HEK293 (cell line): ENCODE measurements at regions of chr6 and their contacts with region 1.

Region 1: GRCh38 chr6:26025894-26026832 is 61.1 kb upstream of the HFE start:
- H3K4me3 ChIP-seq: peak overlapping the region; percentile 48
- H3K27ac ChIP-seq: peak overlapping the region; percentile 47
- H3K4me1 ChIP-seq: peaks cover 18% of the 10 kb centered on the region
- CTCF ChIP-seq: peak; percentile 81

Region 2: GRCh38 chr6:26003102-26003694 is 23.0 kb before region 1 on chr6:
- CTCF ChIA-PET with region 1: interaction called, 198 read pairs
- POLR2A ChIA-PET with region 1: interaction called, 23 read pairs
- H3K4me3 ChIP-seq: no peak overlapping the region
- H3K27ac ChIP-seq: no peak overlapping the region
- H3K4me1 ChIP-seq: no peaks in the 10 kb centered on the region
- CTCF ChIP-seq: no peak

Region 3: DNA sequence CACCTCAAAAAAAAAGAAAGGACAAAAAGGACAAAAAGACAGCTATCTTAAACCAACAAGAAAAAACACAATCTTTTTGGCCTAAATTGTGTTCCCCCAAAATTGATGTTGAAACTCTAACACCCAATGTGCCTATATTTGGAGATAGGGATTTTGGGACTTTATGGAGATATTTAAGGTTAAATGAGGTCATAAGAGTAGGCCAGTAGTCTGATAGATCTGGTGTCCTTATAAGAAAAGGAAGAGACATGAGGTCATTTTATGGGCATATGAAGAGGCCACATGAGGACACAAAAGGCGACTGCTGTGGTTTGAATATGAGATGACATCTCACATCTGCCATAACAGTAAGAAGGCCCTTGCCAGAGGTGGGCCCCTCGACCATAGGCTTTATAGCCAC is 14.1 kb before region 1 on chr6:
- CTCF ChIA-PET with region 1: interaction called, 198 read pairs
- POLR2A ChIA-PET with region 1: interaction called, 336 read pairs
- H3K4me3 ChIP-seq: no peak overlapping the region
- H3K27ac ChIP-seq: no peak overlapping the region
- H3K4me1 ChIP-seq: 0 out of 2 replicates have a peak, but pooled peaks cover 4% of the 10 kb centered on the region
- CTCF ChIP-seq: no peak

Region 4: GRCh38 chr6:26054857-26055669 is 28.9 kb after region 1 on chr6:
- CTCF ChIA-PET with region 1: interaction called, 63 read pairs
- POLR2A ChIA-PET with region 1: interaction called, 100 read pairs
- H3K4me3 ChIP-seq: peak overlapping the region; percentile 85
- H3K27ac ChIP-seq: peak overlapping the region; percentile 81
- H3K4me1 ChIP-seq: peaks cover 5% of the 10 kb centered on the region; the same call in 1 of the 2 replicates
- CTCF ChIP-seq: no peak

Region 5: DNA sequence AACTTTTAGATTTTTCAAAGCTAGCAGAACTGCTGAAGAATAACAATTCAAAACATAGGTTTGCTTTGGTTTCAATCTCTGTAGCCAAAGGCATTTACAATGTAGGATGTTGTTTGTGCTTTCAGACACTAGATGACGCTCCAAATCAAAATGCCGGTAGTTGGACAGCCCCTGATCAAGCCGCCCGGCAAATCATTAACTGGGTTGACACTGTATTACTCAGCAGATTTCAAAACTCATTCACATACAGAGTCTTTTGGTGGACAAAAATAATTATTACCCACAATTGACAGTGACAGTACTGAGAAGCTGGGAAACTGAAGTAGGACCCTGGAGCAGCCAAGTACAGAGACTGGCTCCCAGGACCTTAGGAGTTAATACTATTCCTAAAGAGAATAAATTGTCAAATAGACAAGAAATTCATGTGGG is 39.8 kb after region 1 on chr6:
- CTCF ChIA-PET with region 1: interaction called, 63 read pairs
- POLR2A ChIA-PET with region 1: interaction called, 3 read pairs
- H3K4me3 ChIP-seq: no peak overlapping the region
- H3K27ac ChIP-seq: no peak overlapping the region
- H3K4me1 ChIP-seq: no peaks in the 10 kb centered on the region
- CTCF ChIP-seq: peak; percentile 46

Region 6: GRCh38 chr6:26103770-26104456 is 77.8 kb after region 1 on chr6:
- CTCF ChIA-PET with region 1: interaction called, 64 read pairs
- POLR2A ChIA-PET with region 1: interaction called, 51 read pairs
- H3K4me3 ChIP-seq: peak overlapping the region; percentile 49
- H3K27ac ChIP-seq: peak overlapping the region; percentile 4; the same call in 1 of the 2 replicates
- H3K4me1 ChIP-seq: peaks cover 6% of the 10 kb centered on the region; the same call in 1 of the 2 replicates
- CTCF ChIP-seq: peak; percentile 60